Lower leg skin (tissue), 4 donors: ENCODE measurements at regions of chr1 and their contacts with region 1.

Region 1: DNA sequence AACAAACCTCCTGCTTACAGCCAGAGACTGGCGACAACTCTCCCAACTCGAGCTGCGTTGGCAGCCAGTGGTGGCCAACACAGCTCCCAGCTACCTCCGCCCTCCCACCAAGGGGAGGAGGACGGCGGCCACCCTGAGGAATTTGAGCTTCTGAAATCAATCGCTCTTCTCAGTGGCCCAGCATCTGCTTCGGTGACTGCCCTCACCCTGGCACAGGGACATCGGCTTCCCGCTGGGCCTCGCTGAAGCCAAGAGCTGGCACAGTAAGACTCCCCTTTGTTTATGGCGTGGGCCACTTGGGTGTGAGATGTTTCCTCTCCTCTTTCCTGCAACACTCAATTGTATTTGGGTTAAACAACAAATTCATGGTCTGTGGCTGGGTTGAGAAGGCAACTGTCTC is 136.2 kb downstream of the ZBTB18 start:
- DNase-seq: no peak
- H3K4me3 ChIP-seq: no peak overlapping the region
- CTCF ChIP-seq: no peak
- POLR2A ChIP-seq: no peak

Region 2: DNA sequence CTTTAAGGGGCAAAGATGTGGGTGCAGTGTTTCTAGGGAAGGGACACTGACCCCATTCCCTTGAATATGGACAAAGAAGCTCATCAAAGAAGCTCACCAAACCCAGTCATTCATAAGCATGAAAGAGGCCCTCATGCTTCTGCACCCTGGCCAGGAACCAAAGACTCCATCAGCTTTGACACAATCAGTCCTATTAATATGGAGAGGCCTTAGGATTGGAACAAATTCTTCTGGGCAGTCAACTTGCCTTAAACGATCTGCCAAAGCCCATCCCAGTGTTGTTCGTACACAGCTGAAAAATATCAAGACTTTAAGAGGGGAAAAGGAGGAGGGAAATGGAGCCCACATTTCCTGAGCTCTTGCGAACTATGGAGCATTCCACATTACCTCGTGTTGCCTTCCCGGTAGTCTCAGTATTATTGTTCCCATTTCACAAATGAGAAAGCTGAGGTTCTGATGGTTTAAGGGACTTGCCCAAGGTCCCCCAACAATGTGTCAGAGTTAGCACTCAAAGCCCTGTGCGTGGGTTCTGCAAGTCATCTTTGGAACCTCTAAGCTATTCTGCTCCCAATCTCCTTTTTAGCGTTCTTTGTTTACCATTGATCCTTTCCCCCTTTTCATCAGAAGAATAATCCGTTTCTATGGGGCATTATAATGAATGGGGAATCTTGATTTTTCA is 25.6 kb after region 1 on chr1:
- intact Hi-C with region 1: loop called (anchors 1 kb)
- DNase-seq: peak in 1 of 2 donors; percentile 20
- H3K4me3 ChIP-seq: no peak overlapping the region
- CTCF ChIP-seq: no peak
- POLR2A ChIP-seq: no peak